Mucosa of descending colon (tissue), 3 donors: ENCODE measurements at regions of chr20 and their contacts with region 1.

Region 1: GRCh38 chr20:36555248-36555647 is 13.9 kb downstream of the MYL9 start:
- DNase-seq: no peak
- ATAC-seq: no peak
- H3K4me3 ChIP-seq: no peak overlapping the region
- H3K4me1 ChIP-seq: peaks cover 5% of the 10 kb centered on the region
- CTCF ChIP-seq: no peak

Region 2: DNA sequence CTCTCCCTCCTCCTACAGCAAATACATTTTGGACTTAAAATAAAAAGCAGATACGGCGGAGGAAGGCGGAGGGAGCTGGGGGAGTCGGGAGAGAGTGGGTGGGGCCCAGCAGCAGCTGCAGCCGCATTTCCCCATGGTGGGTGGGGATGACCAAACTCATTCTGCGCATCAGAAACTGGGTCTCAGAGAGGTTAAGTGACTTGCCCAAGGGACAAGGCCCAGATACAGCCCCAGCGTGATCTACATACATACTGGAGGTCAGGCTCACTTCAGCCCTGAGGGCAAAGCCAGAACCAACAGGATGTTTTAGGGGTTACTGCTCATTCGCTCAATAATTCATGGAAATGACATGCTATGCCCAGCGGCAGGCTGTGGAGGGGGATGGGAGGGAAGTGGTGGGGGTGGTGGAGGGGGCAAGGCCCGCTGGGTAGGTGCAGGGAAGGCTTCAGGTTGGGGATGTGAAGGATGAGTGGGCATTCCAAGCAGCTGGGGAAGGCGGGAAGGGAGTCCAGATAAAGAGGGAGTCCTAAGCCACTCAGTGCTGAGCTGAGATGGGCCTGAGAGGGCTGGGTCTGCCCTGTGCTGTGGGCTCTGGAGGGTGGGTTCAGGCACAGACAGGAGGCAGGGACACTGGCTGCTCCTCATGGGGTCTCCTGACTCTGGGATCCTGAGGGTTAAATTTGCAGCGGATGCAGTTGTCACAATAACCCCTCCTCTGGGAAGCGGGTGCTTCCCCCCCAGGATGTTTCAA is 218.1 kb before region 1 on chr20:
- intact Hi-C with region 1: no loop called
- DNase-seq: no peak
- ATAC-seq: no peak
- H3K4me3 ChIP-seq: no peak overlapping the region
- H3K4me1 ChIP-seq: no peaks in the 10 kb centered on the region
- CTCF ChIP-seq: no peak

Region 3: GRCh38 chr20:36591854-36592641 is 36.8 kb after region 1 on chr20:
- intact Hi-C with region 1: loop called in 1 of 2 experiments (anchors 5 kb)
- DNase-seq: peak in 1 of 3 donors; percentile 35
- ATAC-seq: no peak
- H3K4me3 ChIP-seq: no peak overlapping the region
- H3K4me1 ChIP-seq: no peaks in the 10 kb centered on the region
- CTCF ChIP-seq: no peak

Region 4: GRCh38 chr20:36605399-36606157 is 50.3 kb after region 1 on chr20 and contains the start of gene RAB5IF:
- intact Hi-C with region 1: loop called in 1 of 2 experiments (anchors 5 kb)
- DNase-seq: peak; percentile 99 to 100 (median 100)
- ATAC-seq: peak; percentile 94
- H3K4me3 ChIP-seq: peak within 1 kb of the TSS; percentile 98
- H3K4me1 ChIP-seq: peaks cover 23% of the 10 kb centered on the region
- CTCF ChIP-seq: peak; percentile 85
- total RNA-seq, gene RAB5IF: 96.2 to 150 (median 128) TPM